ENCODE measurements at regions of chr2 and their contacts with region 1.

Region 1: DNA sequence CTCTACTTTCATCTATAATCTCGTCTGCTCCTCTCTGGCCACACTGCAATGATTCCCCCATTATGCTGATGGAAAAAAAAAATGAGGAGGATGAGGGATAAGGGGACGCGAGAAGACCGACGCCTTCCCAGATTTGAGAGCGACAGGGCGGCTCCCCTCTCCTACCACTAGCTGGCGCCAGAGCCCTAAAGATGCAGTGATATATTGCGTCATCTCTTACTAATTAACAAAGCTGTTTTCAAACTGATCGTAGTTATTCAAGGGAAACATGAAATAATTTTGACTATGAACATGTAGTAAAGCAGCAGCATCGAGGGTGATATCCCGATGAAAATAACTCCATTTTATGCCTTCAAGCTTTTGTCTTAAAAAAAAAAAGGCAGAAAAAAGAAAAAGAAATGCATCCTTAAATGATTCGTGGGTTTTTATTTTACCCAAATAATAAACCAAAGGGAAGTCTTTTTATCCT is 48.0 kb upstream of the HNRNPA3 start:
- DNase-seq: peak; percentile 90
- H3K4me3 Mint-ChIP-seq: no peak overlapping the region
- H3K27ac Mint-ChIP-seq: no peak overlapping the region
- H3K4me1 Mint-ChIP-seq: peaks cover 17% of the 10 kb centered on the region
- H3K27me3 Mint-ChIP-seq: no peaks in the 10 kb centered on the region
- CTCF ChIP-seq: peak; percentile 97

Region 2: GRCh38 chr2:177187631-177188312 is 23.2 kb after region 1 on chr2:
- CTCF ChIA-PET with region 1: interaction called, 10 read pairs
- POLR2A ChIA-PET with region 1: interaction called, 11 read pairs
- intact Hi-C with region 1: no loop called
- DNase-seq: peak; percentile 32
- H3K4me3 Mint-ChIP-seq: no peak overlapping the region
- H3K27ac Mint-ChIP-seq: peak overlapping the region; percentile 5
- H3K4me1 Mint-ChIP-seq: peaks cover 30% of the 10 kb centered on the region
- H3K27me3 Mint-ChIP-seq: no peaks in the 10 kb centered on the region
- CTCF ChIP-seq: no peak

Region 3: GRCh38 chr2:177229448-177230242 is 65.0 kb after region 1 on chr2:
- CTCF ChIA-PET with region 1: interaction called, 11 read pairs
- POLR2A ChIA-PET with region 1: interaction called, 102 read pairs
- intact Hi-C with region 1: no loop called
- DNase-seq: no peak
- H3K4me3 Mint-ChIP-seq: no peak overlapping the region
- H3K27ac Mint-ChIP-seq: peak overlapping the region; percentile 35
- H3K4me1 Mint-ChIP-seq: peaks cover 21% of the 10 kb centered on the region
- H3K27me3 Mint-ChIP-seq: no peaks in the 10 kb centered on the region
- CTCF ChIP-seq: no peak

Region 4: GRCh38 chr2:177296040-177296439 is 131.4 kb after region 1 on chr2:
- CTCF ChIA-PET with region 1: interaction called, 19 read pairs
- POLR2A ChIA-PET with region 1: interaction called, 19 read pairs
- intact Hi-C with region 1: loop called (anchors 1 kb)
- DNase-seq: peak; percentile 42
- H3K4me3 Mint-ChIP-seq: no peak overlapping the region
- H3K27ac Mint-ChIP-seq: no peak overlapping the region
- H3K4me1 Mint-ChIP-seq: no peaks in the 10 kb centered on the region
- H3K27me3 Mint-ChIP-seq: no peaks in the 10 kb centered on the region
- CTCF ChIP-seq: peak; percentile 32

Region 5: DNA sequence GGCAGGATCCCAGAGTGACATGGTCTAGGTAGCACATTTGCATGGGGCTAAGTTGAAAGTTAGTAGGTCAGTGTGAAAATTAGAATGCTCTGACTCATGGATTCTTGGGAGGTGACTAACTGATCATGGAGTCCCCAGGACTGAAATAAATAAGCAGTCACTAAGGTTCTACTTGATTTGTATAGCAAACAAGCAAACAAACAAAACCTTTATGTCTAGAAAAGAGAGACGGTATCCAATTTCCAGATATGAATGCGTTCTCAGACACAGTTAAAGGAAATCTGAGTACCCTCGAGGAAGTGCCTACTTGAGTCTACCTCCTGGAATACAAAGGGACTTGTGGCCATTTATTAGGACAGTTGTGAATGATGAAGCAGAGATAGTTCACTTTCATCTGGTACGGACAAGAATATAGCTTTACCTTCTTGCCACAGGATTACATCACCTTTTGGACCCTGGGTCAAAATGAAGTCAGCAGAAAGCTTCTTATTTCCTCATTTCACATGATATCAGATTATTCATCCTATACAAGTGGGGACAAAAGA is 173.6 kb after region 1 on chr2:
- CTCF ChIA-PET with region 1: interaction called, 52 read pairs
- POLR2A ChIA-PET with region 1: interaction called, 16 read pairs
- intact Hi-C with region 1: no loop called
- DNase-seq: peak; percentile 56
- H3K4me3 Mint-ChIP-seq: no peak overlapping the region
- H3K27ac Mint-ChIP-seq: peak overlapping the region; percentile 88
- H3K4me1 Mint-ChIP-seq: peaks cover 8% of the 10 kb centered on the region
- H3K27me3 Mint-ChIP-seq: no peaks in the 10 kb centered on the region
- CTCF ChIP-seq: no peak

Region 6: GRCh38 chr2:177724398-177725287 is 560.0 kb after region 1 on chr2:
- CTCF ChIA-PET with region 1: interaction called, 3 read pairs
- POLR2A ChIA-PET with region 1: no interaction called
- intact Hi-C with region 1: loop called (anchors 2 kb)
- DNase-seq: peak; percentile 58
- H3K4me3 Mint-ChIP-seq: no peak overlapping the region
- H3K27ac Mint-ChIP-seq: no peak overlapping the region
- H3K4me1 Mint-ChIP-seq: no peaks in the 10 kb centered on the region
- H3K27me3 Mint-ChIP-seq: peaks cover 53% of the 10 kb centered on the region
- CTCF ChIP-seq: peak; percentile 86